ENCODE measurements at regions of chr19 and their contacts with region 1.

Region 1: GRCh38 chr19:1241417-1242095 is at the start of gene ATP5F1D:
- DNase-seq: peak; percentile 94 to 96
- ATAC-seq: peak; percentile 31 to 77 (median 62)
- H3K4me3 ChIP-seq: peak within 1 kb of the TSS; percentile 63 to 93 (median 86)
- H3K27ac ChIP-seq: peak within 1 kb of the TSS; percentile 95 to 100 (median 100)
- H3K4me1 ChIP-seq: peaks cover 42 to 84% (median 76%) of the 10 kb centered on the region in 9 donors
- H3K27me3 ChIP-seq: peaks cover 0 to 16% (median 0%) of the 10 kb centered on the region in 7 donors
- CTCF ChIP-seq: peak in 1 of 9 donors; percentile 12
- total RNA-seq, gene ATP5F1D: 491 to 770 (median 553) TPM

Region 2: DNA sequence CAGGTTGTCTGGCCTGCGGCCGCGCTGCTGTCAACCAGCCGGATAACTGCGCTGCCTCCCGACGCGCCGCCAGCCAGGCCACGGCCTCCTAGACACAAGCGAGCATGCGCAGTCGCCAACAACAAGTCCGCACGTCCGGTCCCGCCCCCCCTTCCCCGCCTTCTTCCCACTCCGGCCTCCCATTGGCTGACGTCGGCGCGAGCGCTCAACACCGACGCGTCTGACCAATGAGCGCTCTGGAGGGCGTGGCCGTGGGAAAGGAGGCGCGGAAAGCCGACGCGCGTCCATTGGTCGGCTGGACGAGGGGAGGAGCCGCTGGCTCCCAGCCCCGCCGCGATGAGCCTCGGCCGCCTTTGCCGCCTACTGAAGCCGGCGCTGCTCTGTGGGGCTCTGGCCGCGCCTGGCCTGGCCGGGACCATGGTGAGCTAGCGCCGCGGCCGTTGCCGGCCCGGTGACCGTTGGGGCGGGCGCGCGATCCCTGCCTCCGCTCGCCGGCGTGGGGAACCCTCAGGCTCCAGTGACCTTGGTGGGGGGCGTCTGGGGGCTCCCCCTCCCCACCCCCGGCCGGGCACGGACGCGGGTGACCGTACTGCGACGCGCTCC is 137.7 kb before region 1 on chr19 and contains the start of gene GPX4:
- intact Hi-C with region 1: loop called in 1 of 10 experiments (anchors 5 kb)
- DNase-seq: peak; percentile 99
- ATAC-seq: peak; percentile 82 to 92 (median 90)
- H3K4me3 ChIP-seq: peak within 1 kb of the TSS; percentile 40 to 96 (median 82)
- H3K27ac ChIP-seq: peak within 1 kb of the TSS; percentile 88 to 100 (median 98)
- H3K4me1 ChIP-seq: peaks cover 30 to 78% (median 66%) of the 10 kb centered on the region in 9 donors
- H3K27me3 ChIP-seq: no peaks in the 10 kb centered on the region
- CTCF ChIP-seq: no peak
- total RNA-seq, gene GPX4: 244 to 405 (median 299) TPM

Region 3: DNA sequence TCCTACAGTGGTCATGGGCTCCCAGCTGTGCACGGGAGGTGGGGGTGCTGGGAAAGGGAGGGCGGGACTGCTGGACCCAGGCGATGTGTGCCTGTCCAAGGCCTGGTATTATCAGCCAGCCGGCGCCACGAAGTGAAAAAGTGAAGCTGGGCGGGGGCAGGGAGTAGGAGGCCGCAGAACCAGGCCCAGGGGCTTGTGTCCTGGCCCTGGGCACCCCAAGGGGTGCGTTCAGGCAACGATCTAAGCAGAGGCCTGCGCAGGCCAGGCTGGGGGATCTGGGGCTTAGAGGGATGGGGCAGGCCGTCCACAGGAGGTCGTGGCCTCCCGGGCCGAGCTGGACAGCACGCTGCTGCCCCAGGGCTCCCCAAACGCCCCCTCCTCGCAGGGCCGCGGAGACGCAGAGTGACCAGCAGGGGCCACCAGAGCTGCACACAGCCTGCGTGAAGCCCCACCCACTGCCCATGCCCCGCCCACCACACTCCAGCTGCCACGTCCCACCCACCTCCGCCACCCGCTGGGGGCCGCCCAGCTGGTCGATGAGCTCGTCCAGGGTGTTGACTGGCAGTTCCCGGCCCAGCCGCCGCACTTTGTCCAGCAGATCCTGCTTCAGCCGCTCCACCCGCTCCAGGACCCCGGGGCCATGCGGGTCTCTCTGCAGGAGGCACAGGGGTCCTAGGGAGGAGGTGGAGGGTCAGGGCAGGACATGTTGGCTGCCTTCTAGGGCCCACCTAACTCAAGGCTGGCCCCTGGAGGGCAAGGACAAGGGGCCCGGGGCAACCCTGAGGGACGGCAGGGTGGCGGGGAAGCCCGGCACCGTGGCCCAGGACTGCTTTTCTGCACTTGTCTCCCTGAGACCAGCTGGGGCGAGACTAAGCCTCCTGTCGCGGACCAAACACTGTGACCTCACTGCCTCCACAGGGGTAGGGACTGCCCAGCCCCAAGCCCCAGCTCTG is 128.2 kb before region 1 on chr19:
- intact Hi-C with region 1: loop called in 1 of 10 experiments (anchors 1 kb)
- DNase-seq: peak; percentile 97 to 98
- ATAC-seq: peak; percentile 87 to 95 (median 93)
- H3K4me3 ChIP-seq: peak overlapping the region in 6 of 10 donors; percentile 9 to 40 (median 21)
- H3K27ac ChIP-seq: peak overlapping the region in 9 of 10 donors; percentile 40 to 79 (median 71)
- H3K4me1 ChIP-seq: peaks cover 12 to 31% (median 19%) of the 10 kb centered on the region in 9 donors
- H3K27me3 ChIP-seq: no peaks in the 10 kb centered on the region
- CTCF ChIP-seq: peak in 8 of 9 donors; percentile 88 to 100 (median 96)

Region 4: GRCh38 chr19:1183534-1184172 is 57.9 kb before region 1 on chr19:
- intact Hi-C with region 1: no loop called
- DNase-seq: no peak
- ATAC-seq: no peak
- H3K4me3 ChIP-seq: no peak overlapping the region
- H3K27ac ChIP-seq: no peak overlapping the region
- H3K4me1 ChIP-seq: peaks cover 0 to 21% (median 5%) of the 10 kb centered on the region in 9 donors
- H3K27me3 ChIP-seq: peaks cover 0 to 4% (median 0%) of the 10 kb centered on the region in 7 donors
- CTCF ChIP-seq: no peak

Region 5: GRCh38 chr19:1221141-1221903 is 20.2 kb before region 1 on chr19:
- intact Hi-C with region 1: loop called in 4 of 10 experiments (anchors 2 kb)
- DNase-seq: peak; percentile 62 to 79
- ATAC-seq: peak; percentile 40 to 81 (median 58)
- H3K4me3 ChIP-seq: peak overlapping the region in 1 of 10 donors; percentile 10
- H3K27ac ChIP-seq: peak overlapping the region in 8 of 10 donors; percentile 25 to 90 (median 48)
- H3K4me1 ChIP-seq: peaks cover 24 to 73% (median 60%) of the 10 kb centered on the region in 9 donors
- H3K27me3 ChIP-seq: no peaks in the 10 kb centered on the region
- CTCF ChIP-seq: peak; percentile 47 to 82 (median 75)

Region 6: GRCh38 chr19:1269065-1269477 is 27.5 kb after region 1 on chr19 and contains the start of gene CIRBP:
- intact Hi-C with region 1: loop called in 8 of 10 experiments (anchors 1 to 2 kb)
- DNase-seq: peak; percentile 100
- ATAC-seq: peak; percentile 67 to 84 (median 78)
- H3K4me3 ChIP-seq: peak within 1 kb of the TSS; percentile 57 to 98 (median 70)
- H3K27ac ChIP-seq: peak within 1 kb of the TSS; percentile 91 to 100 (median 98)
- H3K4me1 ChIP-seq: peaks cover 56 to 87% (median 83%) of the 10 kb centered on the region in 9 donors
- H3K27me3 ChIP-seq: no peaks in the 10 kb centered on the region
- CTCF ChIP-seq: no peak
- total RNA-seq, gene CIRBP: 227 to 356 (median 280) TPM

Region 7: GRCh38 chr19:1490311-1491113 is 249.0 kb after region 1 on chr19 and contains the start of gene PCSK4:
- intact Hi-C with region 1: no loop called
- DNase-seq: peak; percentile 98 to 100
- ATAC-seq: peak; percentile 92 to 96 (median 96)
- H3K4me3 ChIP-seq: peak within 1 kb of the TSS; percentile 13 to 78 (median 62)
- H3K27ac ChIP-seq: peak within 1 kb of the TSS in 9 of 10 donors; percentile 47 to 75 (median 70)
- H3K4me1 ChIP-seq: peaks cover 3 to 30% (median 14%) of the 10 kb centered on the region in 9 donors
- H3K27me3 ChIP-seq: peaks cover 0 to 21% (median 6%) of the 10 kb centered on the region in 7 donors
- CTCF ChIP-seq: no peak
- total RNA-seq, gene PCSK4: 0.38 to 3.0 (median 1.4) TPM